Activated CD4-positive, alpha-beta memory T cell treated with anti-CD3 and anti-CD28 coated beads for 36 hours (primary cell): ENCODE measurements at regions of chr11 and their contacts with region 1.

Region 1: DNA sequence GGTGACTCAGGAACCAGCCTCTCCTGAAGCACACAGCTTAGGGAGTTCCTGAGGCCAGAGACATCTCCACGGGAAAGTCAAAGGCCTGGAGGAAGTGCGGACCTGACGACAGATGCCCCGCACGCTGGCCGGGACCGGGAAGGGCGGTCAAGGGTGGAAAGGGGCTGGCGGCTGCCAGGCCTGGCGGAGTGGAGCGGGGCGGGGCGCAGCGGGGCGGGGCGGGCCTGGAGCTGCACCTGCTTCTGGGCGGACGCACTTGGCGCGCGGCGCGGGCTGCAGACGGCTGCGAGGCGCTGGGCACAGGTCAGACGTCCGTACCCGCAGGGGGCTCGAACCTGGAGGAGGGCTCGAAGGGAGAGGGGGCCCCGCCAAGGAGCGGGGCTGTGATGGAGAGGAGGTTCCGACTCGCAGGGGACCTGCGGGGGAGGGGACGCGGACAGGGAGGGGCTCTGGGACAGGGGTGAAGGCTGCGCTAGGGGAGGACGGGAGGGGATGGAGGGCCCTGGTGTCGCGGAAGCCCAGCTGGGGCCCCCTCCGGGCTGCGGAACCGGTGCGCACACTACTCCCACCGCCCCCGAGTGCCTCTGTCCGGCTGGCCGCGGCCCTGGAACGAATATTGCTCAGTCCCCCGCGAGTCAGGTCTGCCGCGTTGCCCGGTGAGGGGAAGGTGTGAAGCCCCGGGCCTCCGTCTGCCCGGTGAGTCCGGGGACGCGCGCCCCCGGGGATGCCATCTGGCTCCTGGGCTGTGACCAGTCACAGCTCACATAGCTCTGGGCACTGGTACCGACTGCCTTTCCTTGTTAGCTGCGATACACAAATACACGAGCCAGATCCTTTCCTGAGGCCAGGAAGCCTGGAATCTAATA is at the start of gene TMEM45B:
- DNase-seq: peak; percentile 62
- H3K4me3 Mint-ChIP-seq: peak within 1 kb of the TSS; percentile 87
- H3K27ac Mint-ChIP-seq: peak within 1 kb of the TSS; percentile 78
- H3K4me1 Mint-ChIP-seq: peaks cover 54% of the 10 kb centered on the region
- H3K27me3 Mint-ChIP-seq: peaks cover 2% of the 10 kb centered on the region
- total RNA-seq, gene TMEM45B: 4.9 to 5.8 TPM

Region 2: GRCh38 chr11:129846501-129847335 is 30.9 kb after region 1 on chr11:
- CTCF ChIA-PET with region 1: no interaction called
- POLR2A ChIA-PET with region 1: no interaction called
- intact Hi-C with region 1: loop called (anchors 2 kb)
- DNase-seq: peak; percentile 55
- H3K4me3 Mint-ChIP-seq: no peak overlapping the region
- H3K27ac Mint-ChIP-seq: peak overlapping the region; percentile 64
- H3K4me1 Mint-ChIP-seq: peaks cover 26% of the 10 kb centered on the region
- H3K27me3 Mint-ChIP-seq: no peaks in the 10 kb centered on the region